Psoas muscle (tissue), 8 donors: ENCODE measurements at regions of chr4 and their contacts with region 1.

Region 1: GRCh38 chr4:100189820-100190642 is at the start of gene DDIT4L:
- DNase-seq: peak; percentile 69 to 84
- ATAC-seq: peak; percentile 83 to 87 (median 85)
- H3K4me3 ChIP-seq: peak within 1 kb of the TSS; percentile 90
- H3K27ac ChIP-seq: peak within 1 kb of the TSS; percentile 89
- H3K4me1 ChIP-seq: peaks cover 18% of the 10 kb centered on the region
- H3K27me3 ChIP-seq: no peaks in the 10 kb centered on the region
- CTCF ChIP-seq: no peak
- total RNA-seq, gene DDIT4L: 101 to 403 (median 275) TPM

Region 2: GRCh38 chr4:100248476-100248875 is 58.4 kb after region 1 on chr4:
- intact Hi-C with region 1: loop called in 1 of 2 experiments (anchors 1 kb)
- DNase-seq: no peak
- ATAC-seq: peak; percentile 46 to 74 (median 64)
- H3K4me3 ChIP-seq: no peak overlapping the region
- H3K27ac ChIP-seq: peak overlapping the region; percentile 70
- H3K4me1 ChIP-seq: peaks cover 27% of the 10 kb centered on the region
- H3K27me3 ChIP-seq: no peaks in the 10 kb centered on the region
- CTCF ChIP-seq: no peak

Region 3: GRCh38 chr4:100288161-100288560 is 98.1 kb after region 1 on chr4:
- intact Hi-C with region 1: loop called in 1 of 2 experiments (anchors 5 kb)
- DNase-seq: no peak
- ATAC-seq: peak in 3 of 4 donors; percentile 49 to 70 (median 57)
- H3K4me3 ChIP-seq: no peak overlapping the region
- H3K27ac ChIP-seq: peak overlapping the region; percentile 69
- H3K4me1 ChIP-seq: peaks cover 69% of the 10 kb centered on the region
- H3K27me3 ChIP-seq: no peaks in the 10 kb centered on the region
- CTCF ChIP-seq: no peak

Region 4: DNA sequence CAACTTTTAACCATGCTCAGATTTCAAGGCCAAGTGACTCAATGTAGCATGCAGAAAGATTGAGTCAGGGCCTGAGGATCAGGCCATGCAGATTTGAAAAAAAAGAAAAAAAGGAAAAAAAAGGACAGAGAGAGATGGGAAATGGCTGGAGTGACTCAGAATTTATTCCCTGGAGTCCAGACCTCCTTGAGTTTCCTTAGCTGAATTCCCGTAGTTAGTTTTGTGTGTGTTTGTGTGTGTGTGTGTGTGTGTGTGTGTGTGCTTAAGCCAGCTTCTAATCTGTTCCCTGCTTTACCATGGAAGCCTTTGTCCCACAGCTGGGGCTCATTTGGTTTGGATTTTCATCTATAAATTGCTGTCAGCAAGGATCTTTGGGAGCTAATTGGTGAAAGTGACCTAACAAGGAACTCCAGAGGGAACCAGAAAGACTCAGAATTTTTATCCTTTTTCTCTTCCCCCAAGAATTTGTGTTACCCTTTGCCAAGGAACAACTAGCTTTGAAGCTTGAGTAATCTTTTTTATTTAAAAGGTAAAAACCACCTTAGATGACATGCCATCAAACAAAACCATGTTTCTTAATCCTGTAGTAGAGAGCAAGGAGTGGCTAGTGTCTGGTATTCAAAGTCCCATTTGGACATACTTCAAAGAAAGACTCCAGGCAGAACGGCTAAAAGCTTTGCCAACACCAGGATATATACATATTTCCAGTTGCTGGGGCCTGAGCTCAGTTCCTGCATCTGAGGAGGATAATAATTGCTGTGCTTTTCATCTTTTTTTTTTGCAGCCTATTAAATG is 109.2 kb after region 1 on chr4:
- intact Hi-C with region 1: loop called in 1 of 2 experiments (anchors 1 kb)
- DNase-seq: no peak
- ATAC-seq: peak in 1 of 4 donors; percentile 10
- H3K4me3 ChIP-seq: no peak overlapping the region
- H3K27ac ChIP-seq: peak overlapping the region; percentile 28
- H3K4me1 ChIP-seq: peaks cover 54% of the 10 kb centered on the region
- H3K27me3 ChIP-seq: no peaks in the 10 kb centered on the region
- CTCF ChIP-seq: no peak

Region 5: DNA sequence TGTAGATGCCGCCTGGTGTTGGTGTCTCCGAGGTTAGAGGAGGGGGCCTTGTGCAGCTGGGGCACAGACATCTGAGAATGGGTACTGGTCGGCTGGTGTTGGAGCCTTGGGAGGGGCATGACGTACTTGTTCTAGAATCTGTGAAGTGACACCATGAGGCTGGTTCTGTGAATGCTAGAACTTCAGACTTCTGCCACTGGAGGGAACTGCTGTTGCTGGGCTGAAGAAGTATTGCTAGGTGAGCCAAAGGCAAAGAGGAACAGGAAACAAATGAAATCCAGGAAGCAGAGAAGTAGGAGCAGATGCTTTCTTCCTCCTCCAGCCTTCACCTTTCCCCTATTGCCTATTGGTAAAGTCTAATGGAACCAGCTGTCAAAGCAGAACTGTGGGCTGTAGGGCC is 121.1 kb after region 1 on chr4:
- intact Hi-C with region 1: loop called in 1 of 2 experiments (anchors 10 kb)
- DNase-seq: no peak
- ATAC-seq: peak; percentile 35 to 80 (median 52)
- H3K4me3 ChIP-seq: no peak overlapping the region
- H3K27ac ChIP-seq: no peak overlapping the region
- H3K4me1 ChIP-seq: peaks cover 29% of the 10 kb centered on the region
- H3K27me3 ChIP-seq: no peaks in the 10 kb centered on the region
- CTCF ChIP-seq: peak; percentile 32

Region 6: GRCh38 chr4:100414016-100414790 is 224.2 kb after region 1 on chr4:
- intact Hi-C with region 1: loop called in 1 of 2 experiments (anchors 5 kb)
- DNase-seq: peak; percentile 14 to 56
- ATAC-seq: peak; percentile 98 to 99 (median 98)
- H3K4me3 ChIP-seq: no peak overlapping the region
- H3K27ac ChIP-seq: peak overlapping the region; percentile 77
- H3K4me1 ChIP-seq: peaks cover 26% of the 10 kb centered on the region
- H3K27me3 ChIP-seq: no peaks in the 10 kb centered on the region
- CTCF ChIP-seq: no peak